H1 (cell line): ENCODE measurements at regions of chr7 and their contacts with region 1.

Region 1: GRCh38 chr7:27767374-27767773 is 27.4 kb downstream of the TAX1BP1 start:
- DNase-seq: no peak
- H3K4me3 ChIP-seq: no peak overlapping the region
- H3K27ac ChIP-seq: no peak overlapping the region
- H3K4me1 ChIP-seq: no peaks in the 10 kb centered on the region
- H3K27me3 ChIP-seq: no peaks in the 10 kb centered on the region
- CTCF ChIP-seq: no peak
- EP300 ChIP-seq: no peak
- POLR2A ChIP-seq: no peak
- RAD21 ChIP-seq: no peak

Region 2: DNA sequence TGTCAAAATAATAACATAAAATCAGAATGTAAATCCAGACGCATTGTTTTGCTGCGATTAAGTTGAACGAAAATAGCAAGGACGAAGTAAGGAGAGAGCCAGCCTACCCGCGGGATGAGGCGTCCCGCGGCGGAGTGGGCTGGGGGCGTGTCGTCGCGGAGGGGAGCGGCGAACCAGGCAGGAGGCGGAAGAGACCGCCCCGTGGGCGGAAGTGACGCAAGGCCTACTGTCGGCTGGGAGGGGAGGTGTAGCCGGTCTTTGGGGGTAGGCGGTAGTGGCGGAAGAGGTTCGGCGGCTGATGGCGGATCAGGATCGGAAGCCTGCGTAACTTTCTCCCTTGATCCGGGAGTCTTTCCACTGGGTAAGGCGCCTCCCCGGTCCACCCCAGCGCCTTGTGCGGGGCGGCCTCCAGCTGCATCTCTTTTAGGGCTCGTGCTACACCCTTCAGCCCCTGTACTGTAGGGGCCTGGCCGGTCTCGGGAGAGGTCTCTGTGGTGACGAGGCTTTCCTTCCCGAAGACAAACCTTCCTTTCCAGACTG is 27.4 kb before region 1 on chr7 and contains the start of gene TAX1BP1:
- CTCF ChIA-PET with region 1: interaction called, 7 read pairs
- POLR2A ChIA-PET with region 1: interaction called, 10 read pairs
- DNase-seq: peak; percentile 54 to 92
- H3K4me3 ChIP-seq: peak within 1 kb of the TSS; percentile 90 to 98 (median 92)
- H3K27ac ChIP-seq: peak within 1 kb of the TSS; percentile 86
- H3K4me1 ChIP-seq: peaks cover 0 to 3% (median 1%) of the 10 kb centered on the region in 4 experiments; a peak in 2 of 7 replicates
- H3K27me3 ChIP-seq: no peaks in the 10 kb centered on the region
- CTCF ChIP-seq: no peak
- EP300 ChIP-seq: no peak
- POLR2A ChIP-seq: peak; percentile 67 to 90
- RAD21 ChIP-seq: no peak
- total RNA-seq, gene TAX1BP1: 62.7 and 64.0 TPM in 2 replicates